Dorsolateral prefrontal cortex (tissue), 120 donors: ENCODE measurements at regions of chr15 and their contacts with region 1.

Region 1: GRCh38 chr15:58987489-58988005 is at the start of gene RNF111:
- DNase-seq: peak; percentile 69 to 91 (median 88)
- H3K4me3 ChIP-seq: peak within 1 kb of the TSS; percentile 53 to 99 (median 91)
- H3K27ac ChIP-seq: peak within 1 kb of the TSS; percentile 6 to 97 (median 91)
- H3K27me3 ChIP-seq: no peaks in the 10 kb centered on the region
- CTCF ChIP-seq: peak in 31 of 56 donors; percentile 4 to 49 (median 27)
- total RNA-seq, gene RNF111: 46.8 to 85.1 (median 63.3) TPM

Region 2: GRCh38 chr15:59138243-59138642 is 150.7 kb after region 1 on chr15:
- intact Hi-C with region 1: loop called in 1 of 2 experiments (anchors 10 kb)
- DNase-seq: no peak
- H3K4me3 ChIP-seq: no peak overlapping the region
- H3K27ac ChIP-seq: no peak overlapping the region
- H3K27me3 ChIP-seq: no peaks in the 10 kb centered on the region
- CTCF ChIP-seq: peak in 49 of 56 donors; percentile 10 to 63 (median 38)

Region 3: DNA sequence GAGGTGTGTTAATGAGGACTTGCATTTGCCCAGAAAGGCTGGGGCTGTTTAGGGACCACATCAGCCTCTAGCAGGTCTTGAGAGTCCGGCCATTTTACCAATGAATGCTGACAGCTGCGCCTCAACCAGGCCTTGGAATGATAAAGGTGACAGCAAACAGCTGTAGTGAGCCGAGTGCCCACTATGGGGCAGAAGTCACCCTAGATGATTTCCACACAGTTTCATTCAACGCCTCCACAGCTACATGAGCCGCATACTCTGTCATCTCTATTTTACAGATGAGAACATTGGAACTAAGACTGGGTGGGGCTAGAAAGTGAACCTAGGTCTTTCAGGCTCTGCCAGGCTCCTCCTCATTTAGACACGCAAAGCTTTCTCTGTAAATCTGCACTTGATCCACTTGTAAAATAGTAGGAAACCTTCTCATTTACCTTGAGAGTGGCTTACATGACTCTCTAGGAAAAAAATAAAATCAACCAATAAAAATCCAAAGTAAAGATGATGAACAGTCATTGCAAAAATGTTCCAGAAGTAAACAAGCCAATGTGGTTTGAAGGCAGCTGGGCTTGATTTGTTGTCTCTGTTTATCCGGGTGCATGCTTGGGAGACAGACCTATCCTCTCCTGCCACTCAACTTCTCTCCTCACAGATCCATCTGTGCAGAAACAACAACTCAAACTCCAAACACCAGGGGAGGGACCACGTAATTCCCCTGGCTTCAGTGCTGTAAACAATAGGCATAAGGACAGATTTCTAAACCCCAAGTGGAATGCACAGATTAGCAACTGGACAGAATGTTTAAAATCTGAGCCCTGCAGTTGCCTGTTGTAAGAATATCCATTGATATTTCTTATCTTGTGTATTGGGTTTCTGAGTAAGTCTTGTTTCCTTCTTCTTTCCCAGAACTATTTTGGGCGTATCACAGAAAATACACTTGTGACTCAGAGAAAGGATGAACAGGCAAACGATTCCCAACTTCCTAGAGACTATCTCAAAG is 187.6 kb after region 1 on chr15:
- intact Hi-C with region 1: loop called in 1 of 2 experiments (anchors 10 kb)
- DNase-seq: peak in 9 of 10 donors; percentile 51 to 84 (median 71)
- H3K4me3 ChIP-seq: peak overlapping the region in 2 of 59 donors; percentile 7 to 10
- H3K27ac ChIP-seq: peak overlapping the region in 58 of 59 donors; percentile 24 to 92 (median 83)
- H3K27me3 ChIP-seq: no peaks in the 10 kb centered on the region
- CTCF ChIP-seq: peak; percentile 28 to 85 (median 74)

Region 4: DNA sequence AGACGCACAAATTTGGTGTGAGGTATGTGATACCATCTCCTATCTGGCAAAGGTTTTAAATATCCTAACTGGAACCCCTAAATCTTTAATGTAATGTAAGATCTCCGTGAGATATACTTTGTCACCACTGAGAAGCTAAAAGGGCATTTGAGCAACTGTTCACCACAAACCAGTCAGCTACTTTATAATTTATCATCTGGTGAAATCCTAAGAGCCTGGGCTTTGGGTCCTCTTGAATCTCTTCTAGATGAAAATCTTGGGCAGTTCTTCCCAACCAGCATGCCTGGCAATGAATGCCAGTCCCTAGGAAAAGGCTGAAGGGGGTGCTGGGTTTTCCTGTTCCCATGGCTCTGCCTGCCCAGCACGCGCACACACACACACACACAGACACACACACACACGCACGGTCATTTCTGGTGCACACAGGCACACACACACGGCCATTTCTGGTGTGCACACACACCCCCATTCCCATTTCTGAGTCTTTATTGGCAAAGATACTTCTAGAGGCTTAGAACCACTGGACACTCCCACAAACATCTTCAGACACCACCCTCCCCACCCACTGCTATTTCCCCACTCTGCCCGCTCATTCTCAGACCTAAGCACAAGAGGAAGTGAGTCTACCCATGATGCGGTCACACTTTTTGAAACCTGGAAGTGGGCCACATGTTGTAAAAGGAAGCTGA is 312.5 kb after region 1 on chr15:
- intact Hi-C with region 1: loop called in 1 of 2 experiments (anchors 10 kb)
- DNase-seq: peak in 4 of 10 donors; percentile 21 to 55 (median 42)
- H3K4me3 ChIP-seq: peak overlapping the region in 6 of 59 donors; percentile 1 to 36 (median 24)
- H3K27ac ChIP-seq: peak overlapping the region in 36 of 59 donors; percentile 7 to 84 (median 52)
- H3K27me3 ChIP-seq: no peaks in the 10 kb centered on the region
- CTCF ChIP-seq: no peak

Region 5: DNA sequence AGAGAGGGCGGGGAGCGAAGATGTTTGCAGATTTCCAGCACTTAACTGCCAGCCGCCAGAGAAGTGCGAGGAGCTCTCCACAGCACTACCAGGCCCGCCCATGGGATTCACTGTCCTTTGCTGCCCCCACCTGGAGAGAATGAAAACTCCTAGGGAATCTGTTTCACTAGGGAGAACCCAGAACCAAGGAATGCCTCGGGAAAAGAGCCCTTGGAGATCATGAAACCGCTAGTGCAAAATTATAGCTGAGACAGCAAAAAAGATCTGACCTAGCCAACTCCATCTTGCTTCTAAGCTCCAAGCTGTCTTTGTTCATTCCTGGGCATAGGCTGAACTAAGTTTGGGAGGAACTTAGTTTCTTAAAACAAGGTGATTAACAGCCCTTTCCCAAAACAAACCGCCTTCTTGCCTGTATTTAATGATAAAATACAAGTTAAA is 541.4 kb after region 1 on chr15:
- intact Hi-C with region 1: loop called in 1 of 2 experiments (anchors 10 kb)
- DNase-seq: peak; percentile 44 to 90 (median 82)
- H3K4me3 ChIP-seq: no peak overlapping the region
- H3K27ac ChIP-seq: no peak overlapping the region
- H3K27me3 ChIP-seq: no peaks in the 10 kb centered on the region
- CTCF ChIP-seq: peak; percentile 55 to 98 (median 87)